Activated CD8-positive, alpha-beta T cell treated with anti-CD3 and anti-CD28 coated beads, Interleukin-2, amount 10 ng/mL, durations not matched to agents 7 days and 5 days (primary cell): ENCODE measurements at regions of chr14 and their contacts with region 1.

Region 1: GRCh38 chr14:23095196-23096108 is at the start of gene C14orf119:
- DNase-seq: peak; percentile 100
- ATAC-seq: peak; percentile 94
- H3K4me3 Mint-ChIP-seq: no peak within 1 kb of the TSS
- H3K27ac Mint-ChIP-seq: no peak within 1 kb of the TSS
- H3K4me1 Mint-ChIP-seq: peaks cover 33% of the 10 kb centered on the region
- H3K27me3 Mint-ChIP-seq: no peaks in the 10 kb centered on the region
- total RNA-seq, gene C14orf119: 46.0 to 47.0 TPM

Region 2: GRCh38 chr14:23006544-23007419 is 88.7 kb before region 1 on chr14:
- CTCF ChIA-PET with region 1: interaction called, 11 read pairs
- POLR2A ChIA-PET with region 1: interaction called, 3 read pairs
- DNase-seq: peak; percentile 98
- ATAC-seq: peak; percentile 99
- H3K4me3 Mint-ChIP-seq: peak overlapping the region; percentile 94
- H3K27ac Mint-ChIP-seq: peak overlapping the region; percentile 98
- H3K4me1 Mint-ChIP-seq: peaks cover 51% of the 10 kb centered on the region
- H3K27me3 Mint-ChIP-seq: no peaks in the 10 kb centered on the region

Region 3: DNA sequence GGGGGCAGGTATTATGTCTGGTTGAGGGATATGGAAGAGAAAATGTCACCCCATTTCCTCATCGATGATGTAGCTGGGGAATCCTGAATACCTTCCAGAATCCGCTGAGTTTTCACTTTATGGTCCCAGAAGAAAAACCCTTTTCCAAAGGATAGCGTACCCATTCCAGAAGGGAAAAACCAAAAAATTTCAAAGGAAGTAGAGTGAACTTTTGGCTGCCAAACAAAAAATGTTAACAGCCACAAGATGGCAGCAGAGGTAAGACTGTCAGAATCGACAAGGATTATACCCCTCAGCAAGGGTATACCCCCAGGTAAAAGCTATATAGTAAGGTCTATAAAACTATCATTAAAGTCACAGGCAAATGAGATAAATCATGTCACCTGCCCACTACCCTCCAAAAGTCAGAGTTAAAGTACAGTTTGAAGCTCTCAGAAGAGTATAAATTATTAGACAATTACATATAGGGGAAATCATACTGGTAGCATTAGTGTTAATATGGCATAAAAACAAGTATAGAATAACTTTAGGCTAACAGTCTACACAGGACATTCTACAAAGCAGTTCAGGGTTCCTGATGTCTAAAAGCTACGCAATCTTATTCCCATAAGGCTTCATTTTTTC is 18.6 kb before region 1 on chr14:
- CTCF ChIA-PET with region 1: interaction called, 96 read pairs
- POLR2A ChIA-PET with region 1: interaction called, 28 read pairs
- DNase-seq: peak; percentile 56
- ATAC-seq: peak; percentile 63
- H3K4me3 Mint-ChIP-seq: no peak overlapping the region
- H3K27ac Mint-ChIP-seq: no peak overlapping the region
- H3K4me1 Mint-ChIP-seq: peaks cover 5% of the 10 kb centered on the region
- H3K27me3 Mint-ChIP-seq: no peaks in the 10 kb centered on the region

Region 4: GRCh38 chr14:23186913-23187654 is 91.6 kb after region 1 on chr14:
- CTCF ChIA-PET with region 1: interaction called, 13 read pairs
- POLR2A ChIA-PET with region 1: interaction called, 4 read pairs
- DNase-seq: peak; percentile 47
- ATAC-seq: no peak
- H3K4me3 Mint-ChIP-seq: no peak overlapping the region
- H3K27ac Mint-ChIP-seq: no peak overlapping the region
- H3K4me1 Mint-ChIP-seq: no peaks in the 10 kb centered on the region
- H3K27me3 Mint-ChIP-seq: peaks cover 12% of the 10 kb centered on the region

Region 5: GRCh38 chr14:23301288-23301968 is 206.0 kb after region 1 on chr14:
- CTCF ChIA-PET with region 1: interaction called, 10 read pairs
- POLR2A ChIA-PET with region 1: interaction called, 8 read pairs
- DNase-seq: peak; percentile 97
- ATAC-seq: peak; percentile 86
- H3K4me3 Mint-ChIP-seq: peak overlapping the region; percentile 91
- H3K27ac Mint-ChIP-seq: peak overlapping the region; percentile 99
- H3K4me1 Mint-ChIP-seq: peaks cover 31% of the 10 kb centered on the region
- H3K27me3 Mint-ChIP-seq: peaks cover 11% of the 10 kb centered on the region